ENCODE measurements at regions of chrX and their contacts with region 1.

Region 1: DNA sequence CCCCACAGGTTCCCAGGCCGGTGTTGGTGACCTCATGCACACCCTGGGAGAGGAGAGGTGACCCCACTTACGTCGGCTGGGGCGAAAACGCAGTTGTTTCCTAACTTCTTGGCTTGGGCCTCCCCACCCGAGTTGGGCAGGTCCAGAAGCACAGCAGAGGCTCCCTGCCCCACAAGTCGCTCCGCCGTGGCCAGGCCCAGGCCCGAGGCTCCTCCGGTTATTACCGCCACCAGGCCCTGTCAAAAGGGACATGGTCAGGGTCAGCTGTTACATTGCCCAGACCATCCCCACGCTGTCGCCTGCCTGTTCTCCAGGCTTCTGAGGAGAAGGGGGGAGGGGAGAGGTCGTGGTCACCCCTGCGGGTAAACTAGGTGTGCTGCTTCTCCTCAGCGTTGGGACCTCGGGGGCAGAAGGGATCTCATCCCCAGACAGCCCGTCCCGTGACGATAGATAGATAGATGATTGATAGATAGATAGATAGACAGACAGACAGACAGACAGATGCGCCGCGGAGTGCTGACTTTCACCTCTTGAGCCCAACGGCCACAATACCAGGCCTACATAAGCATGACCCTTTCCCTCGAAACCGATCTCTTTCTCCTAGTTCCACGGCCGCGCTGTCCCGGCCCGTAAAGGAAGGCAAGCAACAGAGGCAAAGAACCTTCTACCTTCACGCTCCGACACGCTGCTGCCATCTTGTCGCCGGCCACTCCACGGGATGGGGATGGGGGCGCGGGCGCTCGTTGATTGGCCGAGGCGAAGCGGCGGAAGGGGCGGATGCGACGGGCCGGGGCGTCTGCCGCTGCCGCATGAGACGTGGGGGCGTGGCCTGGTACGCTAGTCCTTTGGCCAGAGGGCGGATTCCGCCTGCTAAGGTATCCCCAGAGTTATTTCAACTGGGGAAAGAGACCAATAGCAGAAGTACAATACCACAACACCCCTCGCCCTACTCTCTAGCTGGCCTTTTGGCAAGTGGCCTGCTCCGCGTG is at the start of gene HSD17B10:
- DNase-seq: peak; percentile 93
- ATAC-seq: peak; percentile 95
- H3K4me3 Mint-ChIP-seq: peak within 1 kb of the TSS; percentile 98
- H3K27ac Mint-ChIP-seq: peak within 1 kb of the TSS; percentile 92
- H3K4me1 Mint-ChIP-seq: peaks cover 27% of the 10 kb centered on the region
- H3K27me3 Mint-ChIP-seq: peaks cover 2% of the 10 kb centered on the region
- total RNA-seq, gene HSD17B10: 89.0 to 92.7 TPM

Region 2: GRCh38 chrX:53233536-53233935 is 200.4 kb before region 1 on chrX:
- CTCF ChIA-PET with region 1: no interaction called
- POLR2A ChIA-PET with region 1: no interaction called
- intact Hi-C with region 1: no loop called
- DNase-seq: no peak
- ATAC-seq: no peak
- H3K4me3 Mint-ChIP-seq: no peak overlapping the region
- H3K27ac Mint-ChIP-seq: no peak overlapping the region
- H3K4me1 Mint-ChIP-seq: no peaks in the 10 kb centered on the region
- H3K27me3 Mint-ChIP-seq: no peaks in the 10 kb centered on the region

Region 3: DNA sequence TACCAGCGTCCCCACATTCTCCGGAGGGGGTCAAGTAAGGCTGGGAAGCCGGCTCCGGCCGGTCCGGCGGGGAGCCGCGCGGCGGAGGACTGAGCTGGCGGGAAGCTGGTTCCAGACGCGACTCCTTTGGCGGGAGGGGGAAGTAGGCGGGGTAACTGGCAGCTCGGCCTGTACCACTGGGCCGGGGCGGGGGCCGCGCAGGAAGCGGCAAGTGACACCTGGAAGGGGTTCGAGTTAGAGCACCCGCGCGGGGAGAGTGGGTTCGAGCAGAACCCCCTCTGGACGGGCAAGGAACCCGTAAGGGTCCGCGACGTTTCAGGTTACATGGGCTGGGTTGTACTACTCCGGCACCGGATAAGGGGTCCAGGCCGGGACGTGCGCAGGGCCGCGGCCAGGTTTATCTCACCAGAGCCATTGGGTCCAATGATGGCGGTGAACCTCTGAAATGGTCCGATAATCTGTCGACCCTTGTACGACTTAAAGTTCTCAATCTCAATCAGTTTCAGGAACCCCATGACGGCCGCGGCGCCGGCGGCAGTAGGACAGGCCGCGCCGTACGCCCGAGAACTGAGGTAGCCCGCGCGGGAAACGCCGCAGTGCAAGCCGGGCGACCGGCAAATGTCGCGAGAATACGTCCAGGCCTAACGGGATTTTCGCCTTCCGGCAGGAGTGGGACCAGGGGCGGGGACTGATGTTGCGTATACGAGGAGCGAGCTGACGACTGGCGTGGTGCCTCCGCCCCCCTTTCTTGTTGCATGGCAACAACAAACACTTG is 11.7 kb before region 1 on chrX and contains the start of gene SMC1A:
- CTCF ChIA-PET with region 1: interaction called, 13 read pairs
- POLR2A ChIA-PET with region 1: interaction called, 9 read pairs
- intact Hi-C with region 1: loop called (anchors 1 kb)
- DNase-seq: peak; percentile 96
- ATAC-seq: peak; percentile 91
- H3K4me3 Mint-ChIP-seq: peak within 1 kb of the TSS; percentile 94
- H3K27ac Mint-ChIP-seq: peak within 1 kb of the TSS; percentile 97
- H3K4me1 Mint-ChIP-seq: peaks cover 27% of the 10 kb centered on the region
- H3K27me3 Mint-ChIP-seq: no peaks in the 10 kb centered on the region
- total RNA-seq, gene SMC1A: 155 to 190 TPM

Region 4: DNA sequence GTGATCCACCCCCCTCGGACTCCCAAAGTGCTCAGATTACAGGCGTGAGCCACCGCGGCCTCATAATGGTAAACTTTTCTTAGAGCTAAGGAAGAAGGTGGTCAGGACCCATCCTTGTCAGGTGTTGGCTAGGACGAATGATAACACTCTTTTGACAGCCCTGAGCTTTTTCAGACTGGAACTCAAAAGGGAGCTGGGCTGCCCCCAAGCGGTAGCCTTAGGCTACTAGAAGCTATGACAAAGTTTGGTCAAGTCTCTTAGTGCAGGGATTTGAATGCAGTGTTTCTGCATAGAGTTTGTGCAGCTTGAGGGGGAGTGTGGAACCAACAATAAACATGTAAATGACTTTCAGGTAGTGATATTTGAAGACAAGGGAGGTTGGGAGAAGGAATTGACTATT is 12.0 kb after region 1 on chrX:
- CTCF ChIA-PET with region 1: interaction called, 10 read pairs
- POLR2A ChIA-PET with region 1: no interaction called
- intact Hi-C with region 1: no loop called
- DNase-seq: peak; percentile 70
- ATAC-seq: peak; percentile 45
- H3K4me3 Mint-ChIP-seq: no peak overlapping the region
- H3K27ac Mint-ChIP-seq: no peak overlapping the region
- H3K4me1 Mint-ChIP-seq: peaks cover 4% of the 10 kb centered on the region
- H3K27me3 Mint-ChIP-seq: no peaks in the 10 kb centered on the region

Region 5: DNA sequence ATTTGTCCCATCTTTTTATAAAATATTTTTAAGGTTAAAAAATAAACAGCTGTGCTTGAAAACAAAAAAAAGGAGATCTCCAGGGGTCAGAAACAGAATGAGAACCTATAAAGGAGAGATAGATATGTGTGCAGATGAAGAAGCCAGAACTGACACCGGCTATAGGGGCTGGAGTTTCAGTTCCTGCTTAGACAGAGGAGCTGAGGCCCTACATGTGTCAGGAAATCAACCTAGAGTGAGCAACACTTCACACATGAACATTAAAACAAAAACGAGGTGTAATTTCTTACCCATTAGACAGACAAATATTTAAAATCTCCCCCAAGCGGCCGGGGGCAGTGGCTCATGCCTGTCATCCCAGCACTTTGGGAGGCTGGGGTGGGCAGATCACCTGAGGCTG is 270.3 kb after region 1 on chrX:
- CTCF ChIA-PET with region 1: no interaction called
- POLR2A ChIA-PET with region 1: no interaction called
- intact Hi-C with region 1: no loop called
- DNase-seq: no peak
- ATAC-seq: no peak
- H3K4me3 Mint-ChIP-seq: no peak overlapping the region
- H3K27ac Mint-ChIP-seq: no peak overlapping the region
- H3K4me1 Mint-ChIP-seq: peaks cover under 1% of the 10 kb centered on the region
- H3K27me3 Mint-ChIP-seq: no peaks in the 10 kb centered on the region

Measured in activated CD4-positive, alpha-beta T cell treated with anti-CD3 and anti-CD28 coated beads for 36 hours (primary cell).